HepG2 (cell line): ENCODE measurements at regions of chr17 and their contacts with region 1.

Region 1: GRCh38 chr17:45385331-45385997 is 47.2 kb downstream of the ARHGAP27 start:
- DNase-seq: peak; percentile 73
- ATAC-seq: peak; percentile 93
- H3K4me3 ChIP-seq: peak overlapping the region in 1 of 3 experiments; percentile 13; a peak in 1 of 6 replicates
- H3K27ac ChIP-seq: no peak overlapping the region
- H3K4me1 ChIP-seq: peaks cover 14% of the 10 kb centered on the region
- H3K27me3 ChIP-seq: peaks cover 0 to 45% of the 10 kb centered on the region in 2 experiments; a peak in 3 of 5 replicates
- CTCF ChIP-seq: peak; percentile 99
- EP300 ChIP-seq: no peak
- POLR2A ChIP-seq: no peak
- RAD21 ChIP-seq: peak; percentile 98

Region 2: DNA sequence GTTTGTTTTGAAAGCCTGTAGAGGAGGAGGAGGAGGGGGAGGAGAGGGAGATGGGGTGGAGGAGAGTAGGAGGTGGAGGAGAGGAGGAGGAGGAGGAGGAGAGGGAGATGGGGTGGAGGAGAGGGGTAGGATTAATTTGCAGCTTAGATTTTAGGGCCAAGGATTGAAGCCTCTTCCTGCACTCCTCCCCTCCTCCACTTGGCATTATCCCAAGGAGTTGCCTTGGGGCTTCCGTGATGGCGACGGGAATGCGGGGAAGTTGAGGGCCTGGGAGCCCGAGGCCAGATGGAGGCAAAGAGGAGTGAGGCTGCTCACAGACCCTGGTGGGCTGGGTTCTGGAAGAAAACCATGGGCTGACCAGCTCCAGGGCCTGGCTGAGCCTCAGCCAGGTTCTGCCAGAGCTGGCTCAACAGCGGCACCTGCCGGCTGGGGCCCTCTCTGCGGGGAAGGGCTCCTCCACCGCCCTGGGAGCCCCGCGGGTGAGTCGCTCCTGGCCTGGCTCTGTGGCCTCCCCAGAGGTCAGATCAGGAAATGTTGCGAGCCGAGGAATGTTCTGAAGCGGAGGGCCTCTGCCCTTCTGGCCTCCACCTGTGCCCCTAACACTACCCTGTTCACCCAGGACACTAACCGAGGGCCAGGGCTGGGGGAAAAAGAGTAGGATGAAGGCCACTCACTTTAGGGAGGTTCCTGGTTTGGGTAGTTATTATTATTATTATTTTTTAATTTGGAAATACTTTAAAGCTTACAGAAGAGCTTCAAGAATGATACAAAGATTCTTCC is 187.7 kb before region 1 on chr17:
- CTCF ChIA-PET with region 1: no interaction called
- POLR2A ChIA-PET with region 1: no interaction called
- in situ Hi-C with region 1: no loop called
- intact Hi-C with region 1: no loop called
- DNase-seq: peak; percentile 92
- ATAC-seq: peak; percentile 91
- H3K4me3 ChIP-seq: peak overlapping the region; percentile 33 to 63 (median 41); a peak in 5 of 6 replicates
- H3K27ac ChIP-seq: peak overlapping the region; percentile 39
- H3K4me1 ChIP-seq: peaks cover 71% of the 10 kb centered on the region
- H3K27me3 ChIP-seq: no peaks in the 10 kb centered on the region
- CTCF ChIP-seq: peak; percentile 100
- EP300 ChIP-seq: peak; percentile 7 to 69; a peak in 2 of 4 replicates
- POLR2A ChIP-seq: no peak
- RAD21 ChIP-seq: peak; percentile 100

Region 3: DNA sequence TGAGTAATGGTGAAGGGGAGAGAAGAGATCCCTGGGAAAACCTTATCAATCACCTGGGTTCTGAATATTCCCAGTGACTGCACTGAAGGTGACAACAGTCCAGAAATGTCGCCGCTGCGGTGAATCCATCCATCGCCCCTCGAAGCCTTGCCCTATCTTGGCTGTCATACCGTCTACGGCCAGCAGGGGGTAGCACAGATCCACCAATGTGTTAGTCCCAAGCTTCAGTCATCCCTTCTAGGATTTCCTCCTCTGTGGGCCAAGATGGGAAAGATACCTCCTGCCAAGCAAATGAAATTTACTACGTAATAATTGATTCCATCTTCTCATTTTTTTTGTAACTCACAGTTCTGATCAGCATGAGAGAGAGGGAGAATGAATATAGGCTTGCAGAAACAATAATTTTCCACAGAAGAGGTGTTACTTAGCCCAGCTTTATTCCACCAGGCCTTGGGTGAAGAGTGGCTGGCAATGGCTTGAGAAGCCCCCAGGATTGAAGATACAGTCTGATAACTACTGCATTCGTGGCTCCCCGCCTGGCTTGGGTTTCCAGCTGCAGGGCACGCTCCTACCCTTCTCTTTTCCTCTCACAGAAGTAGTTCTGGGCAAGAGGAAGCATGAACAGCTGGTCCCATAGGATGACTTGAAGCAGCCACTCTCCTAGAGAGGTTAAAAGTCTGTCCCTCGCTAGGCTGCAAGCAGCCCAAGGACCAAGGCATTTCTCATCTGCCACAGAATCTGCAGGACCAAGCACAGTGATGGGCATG is 166.4 kb before region 1 on chr17:
- CTCF ChIA-PET with region 1: interaction called, 20 read pairs
- POLR2A ChIA-PET with region 1: no interaction called
- in situ Hi-C with region 1: no loop called
- intact Hi-C with region 1: loop called (anchors 1 kb)
- DNase-seq: peak; percentile 76
- ATAC-seq: peak; percentile 79
- H3K4me3 ChIP-seq: no peak overlapping the region
- H3K27ac ChIP-seq: no peak overlapping the region
- H3K4me1 ChIP-seq: peaks cover 6% of the 10 kb centered on the region; the same call in 1 of the 2 replicates
- H3K27me3 ChIP-seq: peaks cover 17 to 44% of the 10 kb centered on the region in 2 experiments; a peak in 4 of 5 replicates
- CTCF ChIP-seq: peak; percentile 98
- EP300 ChIP-seq: no peak
- POLR2A ChIP-seq: no peak
- RAD21 ChIP-seq: peak; percentile 94

Region 4: DNA sequence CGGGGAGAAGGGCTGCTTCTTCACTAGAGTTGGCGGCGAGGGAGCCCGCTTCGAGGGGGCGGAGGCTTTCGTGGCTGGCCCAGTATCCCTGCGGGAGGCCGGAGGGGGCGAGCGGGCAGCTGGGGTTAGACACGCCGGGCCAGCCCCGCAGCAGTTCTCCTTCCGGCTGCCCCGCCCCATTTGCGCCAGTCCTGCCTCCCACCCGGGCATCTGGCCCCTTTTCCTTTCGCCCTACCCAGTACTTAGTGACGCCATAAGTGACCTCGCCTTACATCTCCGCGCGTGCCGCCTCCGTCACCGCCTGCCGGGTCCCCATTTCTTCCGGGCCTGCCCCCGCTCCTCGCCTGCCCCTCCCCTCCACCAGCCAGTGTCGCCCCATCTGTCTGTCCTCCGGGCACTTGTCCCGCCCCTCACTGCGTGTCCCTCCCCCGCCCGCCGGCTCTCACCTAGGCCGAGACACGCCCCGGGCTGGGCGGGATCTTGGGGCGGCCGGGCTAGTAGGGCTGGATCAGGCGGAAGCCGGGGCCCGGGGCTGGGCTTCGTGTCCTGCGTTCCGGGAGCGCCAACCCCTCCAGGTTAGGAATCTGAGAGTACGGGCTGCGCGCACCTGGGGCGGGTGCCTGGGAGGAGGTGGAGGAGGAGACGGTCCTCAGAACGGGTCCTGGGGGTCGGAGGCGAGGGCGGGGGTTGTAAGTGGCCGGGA is 137.9 kb before region 1 on chr17:
- CTCF ChIA-PET with region 1: no interaction called
- POLR2A ChIA-PET with region 1: no interaction called
- in situ Hi-C with region 1: no loop called
- intact Hi-C with region 1: loop called (anchors 1 kb)
- DNase-seq: peak; percentile 89
- ATAC-seq: peak; percentile 87
- H3K4me3 ChIP-seq: peak overlapping the region; percentile 80 to 84 (median 84)
- H3K27ac ChIP-seq: no peak overlapping the region
- H3K4me1 ChIP-seq: peaks cover 40% of the 10 kb centered on the region
- H3K27me3 ChIP-seq: peaks cover under 1 to 34% of the 10 kb centered on the region in 2 experiments; a peak in 4 of 5 replicates
- CTCF ChIP-seq: no peak
- EP300 ChIP-seq: no peak
- POLR2A ChIP-seq: peak; percentile 44 to 62; a peak in 3 of 4 replicates
- RAD21 ChIP-seq: 0 out of 2 replicates have a peak, but pooled peaks have one; percentile 7

Region 5: GRCh38 chr17:45284176-45285140 is 101.0 kb before region 1 on chr17:
- CTCF ChIA-PET with region 1: interaction called, 114 read pairs
- POLR2A ChIA-PET with region 1: no interaction called
- in situ Hi-C with region 1: loop called (anchors 5 kb)
- intact Hi-C with region 1: loop called (anchors 2 kb)
- DNase-seq: no peak
- ATAC-seq: peak; percentile 65
- H3K4me3 ChIP-seq: no peak overlapping the region
- H3K27ac ChIP-seq: no peak overlapping the region
- H3K4me1 ChIP-seq: no peaks in the 10 kb centered on the region
- H3K27me3 ChIP-seq: no peaks in the 10 kb centered on the region
- CTCF ChIP-seq: peak; percentile 71
- EP300 ChIP-seq: no peak
- POLR2A ChIP-seq: no peak
- RAD21 ChIP-seq: peak; percentile 39; the same call in 1 of the 2 replicates

Region 6: GRCh38 chr17:45371414-45372327 is 13.8 kb before region 1 on chr17:
- CTCF ChIA-PET with region 1: interaction called, 3 read pairs
- POLR2A ChIA-PET with region 1: interaction called, 13 read pairs
- in situ Hi-C with region 1: no loop called
- intact Hi-C with region 1: no loop called
- DNase-seq: peak; percentile 89
- ATAC-seq: peak; percentile 97
- H3K4me3 ChIP-seq: peak overlapping the region; percentile 66 to 76 (median 67)
- H3K27ac ChIP-seq: peak overlapping the region; percentile 66
- H3K4me1 ChIP-seq: peaks cover 47% of the 10 kb centered on the region
- H3K27me3 ChIP-seq: peaks cover 0 to 3% of the 10 kb centered on the region in 2 experiments; a peak in 1 of 5 replicates
- CTCF ChIP-seq: peak; percentile 48
- EP300 ChIP-seq: peak in 1 of 2 experiments; percentile 18; a peak in 2 of 4 replicates
- POLR2A ChIP-seq: peak in 1 of 2 experiments; percentile 87; a peak in 2 of 4 replicates
- RAD21 ChIP-seq: peak; percentile 65